Mucosa of descending colon (tissue), 3 donors: ENCODE measurements at regions of chr2 and their contacts with region 1.

Region 1: DNA sequence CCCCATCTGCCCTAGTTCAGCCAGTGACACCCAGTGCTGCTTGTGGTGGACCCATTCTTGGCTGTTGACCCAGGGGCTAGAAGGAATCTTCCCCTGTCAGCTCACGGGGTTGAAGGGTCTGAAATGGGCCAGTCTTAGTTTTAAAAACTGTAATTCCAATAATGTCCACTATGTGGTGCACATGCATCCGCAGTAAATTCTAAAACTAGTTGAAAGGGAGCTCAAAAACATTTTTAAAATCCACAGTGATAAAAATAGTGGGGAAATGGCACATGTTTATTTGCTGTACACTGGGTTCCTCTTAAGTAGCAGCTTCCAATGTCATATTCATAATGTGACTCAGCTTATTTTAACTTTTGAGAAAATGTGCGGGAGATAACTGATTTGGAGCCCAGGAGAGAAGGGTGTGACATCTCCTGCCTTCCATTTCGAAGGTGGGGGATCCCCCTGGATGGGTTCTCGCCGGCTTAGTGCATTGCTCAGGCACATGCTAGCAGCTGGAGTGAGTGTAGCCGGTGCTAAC is 32.8 kb downstream of the GRHL1 start:
- DNase-seq: no peak
- ATAC-seq: peak; percentile 67
- H3K4me3 ChIP-seq: no peak overlapping the region
- H3K4me1 ChIP-seq: peaks cover 8% of the 10 kb centered on the region
- CTCF ChIP-seq: peak; percentile 40

Region 2: GRCh38 chr2:10043906-10044601 is 59.8 kb after region 1 on chr2:
- intact Hi-C with region 1: loop called (anchors 5 to 10 kb)
- DNase-seq: peak; percentile 97 to 98 (median 97)
- ATAC-seq: peak; percentile 83
- H3K4me3 ChIP-seq: peak overlapping the region; percentile 3
- H3K4me1 ChIP-seq: peaks cover 5% of the 10 kb centered on the region
- CTCF ChIP-seq: no peak